HCT116 (cell line): ENCODE measurements at regions of chr19 and their contacts with region 1.

Region 1: GRCh38 chr19:40529093-40529954 is 47.3 kb upstream of the SHKBP1 start:
- DNase-seq: peak; percentile 78
- ATAC-seq: peak; percentile 76
- H3K4me3 ChIP-seq: peak overlapping the region; percentile 27 to 30
- H3K27ac ChIP-seq: peak overlapping the region; percentile 54
- H3K4me1 ChIP-seq: peaks cover 22 to 29% of the 10 kb centered on the region in 2 experiments
- H3K27me3 ChIP-seq: no peaks in the 10 kb centered on the region
- CTCF ChIP-seq: peak; percentile 81 to 91 (median 86)
- POLR2A ChIP-seq: no peak
- RAD21 ChIP-seq: peak; percentile 51

Region 2: DNA sequence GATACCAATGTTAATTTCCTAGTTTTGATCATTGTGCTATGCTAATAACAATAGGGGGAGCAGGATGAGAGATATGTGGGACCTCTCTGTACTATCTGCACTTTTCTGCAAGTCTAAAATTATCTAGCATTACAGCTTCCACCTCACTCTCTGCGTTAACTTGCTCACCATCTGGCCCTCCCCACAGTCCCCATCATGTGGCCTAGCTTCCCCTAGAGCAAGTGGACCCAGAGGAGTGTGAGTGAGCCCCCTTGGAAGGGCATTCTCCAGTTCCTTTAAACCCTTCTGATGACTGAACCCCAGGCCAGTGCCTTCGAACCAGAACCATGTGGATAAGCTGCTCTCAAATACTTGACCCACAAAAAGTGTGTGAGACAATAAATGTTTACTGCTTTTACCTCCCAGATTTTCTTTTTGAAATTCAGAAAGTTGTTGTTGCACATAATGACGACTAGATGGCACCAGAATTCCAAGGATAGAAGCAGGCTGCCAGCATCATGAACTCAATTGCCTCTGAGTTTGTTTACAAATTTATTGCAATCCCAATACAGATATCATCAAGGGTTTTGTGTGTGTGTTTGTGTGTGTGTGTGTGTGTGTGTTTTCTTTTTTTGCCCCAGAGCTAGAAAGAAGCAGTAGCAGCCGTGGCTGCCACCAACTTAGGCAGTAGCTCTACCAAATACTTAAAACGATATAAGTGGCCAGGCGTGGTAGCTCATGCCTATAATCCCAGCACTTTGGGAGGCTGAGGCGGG is 389.6 kb before region 1 on chr19:
- CTCF ChIA-PET with region 1: no interaction called
- POLR2A ChIA-PET with region 1: no interaction called
- RAD21 ChIA-PET with region 1: no interaction called
- intact Hi-C with region 1: loop called (anchors 10 kb)
- DNase-seq: peak; percentile 48
- ATAC-seq: peak; percentile 80
- H3K4me3 ChIP-seq: no peak overlapping the region
- H3K27ac ChIP-seq: no peak overlapping the region
- H3K4me1 ChIP-seq: no peaks in the 10 kb centered on the region
- H3K27me3 ChIP-seq: peaks cover 18% of the 10 kb centered on the region; the same call in 1 of the 2 replicates
- CTCF ChIP-seq: peak; percentile 60 to 91 (median 85)
- POLR2A ChIP-seq: no peak
- RAD21 ChIP-seq: peak; percentile 98

Region 3: GRCh38 chr19:40413291-40413845 is 116.0 kb before region 1 on chr19 and contains the start of gene PRX:
- CTCF ChIA-PET with region 1: no interaction called
- POLR2A ChIA-PET with region 1: no interaction called
- RAD21 ChIA-PET with region 1: no interaction called
- intact Hi-C with region 1: no loop called
- DNase-seq: no peak
- ATAC-seq: no peak
- H3K4me3 ChIP-seq: no peak within 1 kb of the TSS
- H3K27ac ChIP-seq: no peak within 1 kb of the TSS; the same call in 1 of the 2 replicates
- H3K4me1 ChIP-seq: peaks cover 41 to 71% of the 10 kb centered on the region in 2 experiments
- H3K27me3 ChIP-seq: no peaks in the 10 kb centered on the region
- CTCF ChIP-seq: no peak
- POLR2A ChIP-seq: no peak
- RAD21 ChIP-seq: no peak
- total RNA-seq, gene PRX: 4.8 TPM

Region 4: DNA sequence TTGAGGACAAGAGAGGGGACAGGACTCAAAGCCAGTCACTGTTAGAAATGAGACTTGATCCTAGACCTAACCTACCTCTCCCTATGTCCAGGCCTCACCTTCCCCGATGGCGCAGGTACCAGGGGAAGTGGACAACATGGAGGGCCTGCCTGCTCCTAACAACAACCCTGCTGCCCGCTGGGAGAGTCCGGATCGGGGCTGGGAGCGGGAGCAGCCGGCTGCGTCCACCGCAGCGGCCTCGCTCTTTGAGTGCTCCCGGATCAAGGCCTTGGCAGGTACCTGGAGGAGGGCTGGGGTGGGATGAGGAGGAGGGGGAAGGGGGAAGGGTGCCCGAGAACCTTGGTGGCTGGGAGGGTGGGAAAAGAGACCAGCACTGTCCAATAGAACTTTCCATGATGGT is 56.8 kb before region 1 on chr19:
- CTCF ChIA-PET with region 1: no interaction called
- POLR2A ChIA-PET with region 1: no interaction called
- RAD21 ChIA-PET with region 1: no interaction called
- intact Hi-C with region 1: no loop called
- DNase-seq: no peak
- ATAC-seq: no peak
- H3K4me3 ChIP-seq: no peak overlapping the region
- H3K27ac ChIP-seq: no peak overlapping the region
- H3K4me1 ChIP-seq: peaks cover 2 to 8% of the 10 kb centered on the region in 2 experiments; a peak in 3 of 4 replicates
- H3K27me3 ChIP-seq: no peaks in the 10 kb centered on the region
- CTCF ChIP-seq: no peak
- POLR2A ChIP-seq: no peak
- RAD21 ChIP-seq: no peak

Region 5: DNA sequence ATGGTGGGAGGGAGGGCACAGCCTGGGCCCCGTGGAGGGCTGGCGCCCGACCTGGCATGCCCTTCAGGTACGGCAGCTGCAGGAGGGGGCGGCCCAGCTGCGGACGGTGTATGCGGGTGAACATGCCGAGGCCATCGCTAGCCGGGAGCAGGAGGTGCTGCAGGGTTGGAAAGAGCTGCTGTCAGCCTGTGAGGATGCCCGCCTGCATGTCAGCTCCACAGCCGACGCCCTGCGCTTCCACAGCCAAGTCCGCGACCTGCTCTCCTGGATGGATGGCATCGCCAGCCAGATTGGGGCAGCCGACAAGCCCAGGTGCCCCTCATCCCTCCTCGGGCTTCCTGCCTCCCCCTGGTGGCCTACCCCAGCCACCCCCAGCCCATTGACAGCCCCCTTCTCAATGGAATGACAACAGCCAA is 30.8 kb after region 1 on chr19:
- CTCF ChIA-PET with region 1: no interaction called
- POLR2A ChIA-PET with region 1: no interaction called
- RAD21 ChIA-PET with region 1: no interaction called
- intact Hi-C with region 1: no loop called
- DNase-seq: no peak
- ATAC-seq: no peak
- H3K4me3 ChIP-seq: no peak overlapping the region
- H3K27ac ChIP-seq: no peak overlapping the region
- H3K4me1 ChIP-seq: peaks cover 0 to under 1% of the 10 kb centered on the region in 2 experiments; a peak in 1 of 4 replicates
- H3K27me3 ChIP-seq: no peaks in the 10 kb centered on the region
- CTCF ChIP-seq: no peak
- POLR2A ChIP-seq: no peak
- RAD21 ChIP-seq: no peak

Region 6: GRCh38 chr19:40754611-40755246 is 225.4 kb after region 1 on chr19:
- CTCF ChIA-PET with region 1: no interaction called
- POLR2A ChIA-PET with region 1: no interaction called
- RAD21 ChIA-PET with region 1: no interaction called
- intact Hi-C with region 1: no loop called
- DNase-seq: no peak
- ATAC-seq: no peak
- H3K4me3 ChIP-seq: no peak overlapping the region
- H3K27ac ChIP-seq: no peak overlapping the region
- H3K4me1 ChIP-seq: peaks cover 7 to 27% of the 10 kb centered on the region in 2 experiments; a peak in 3 of 4 replicates
- H3K27me3 ChIP-seq: no peaks in the 10 kb centered on the region
- CTCF ChIP-seq: no peak
- POLR2A ChIP-seq: no peak
- RAD21 ChIP-seq: no peak